Colonic mucosa (tissue), 4 donors: ENCODE measurements at regions of chr18 and their contacts with region 1.

Region 1: GRCh38 chr18:21179590-21180220 is 62.3 kb upstream of the GREB1L start:
- DNase-seq: peak; percentile 49
- H3K4me3 ChIP-seq: no peak overlapping the region
- H3K27ac ChIP-seq: no peak overlapping the region
- H3K4me1 ChIP-seq: no peaks in the 10 kb centered on the region
- H3K27me3 ChIP-seq: no peaks in the 10 kb centered on the region
- CTCF ChIP-seq: peak; percentile 50

Region 2: DNA sequence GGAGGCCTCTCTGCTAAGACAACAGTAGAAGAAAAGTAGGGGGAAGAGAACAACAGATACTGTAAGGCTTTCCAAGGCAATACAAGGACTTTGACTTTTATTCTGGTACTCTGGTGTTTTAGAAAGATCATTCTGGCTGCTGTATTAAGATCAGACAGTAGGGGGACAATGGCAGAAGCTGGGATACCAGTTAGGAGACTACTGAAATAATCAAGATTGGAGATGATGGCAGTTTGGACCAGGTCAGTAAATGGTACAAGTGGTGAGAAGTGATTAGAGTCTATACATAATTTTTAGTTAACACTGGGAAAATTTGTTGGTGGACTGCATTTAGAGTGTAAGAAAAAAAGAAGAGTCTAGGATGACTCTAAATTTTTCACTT is 207.8 kb before region 1 on chr18:
- intact Hi-C with region 1: loop called (anchors 10 kb)
- DNase-seq: no peak
- H3K4me3 ChIP-seq: no peak overlapping the region
- H3K27ac ChIP-seq: no peak overlapping the region
- H3K4me1 ChIP-seq: no peaks in the 10 kb centered on the region
- H3K27me3 ChIP-seq: no peaks in the 10 kb centered on the region
- CTCF ChIP-seq: peak; percentile 28

Region 3: DNA sequence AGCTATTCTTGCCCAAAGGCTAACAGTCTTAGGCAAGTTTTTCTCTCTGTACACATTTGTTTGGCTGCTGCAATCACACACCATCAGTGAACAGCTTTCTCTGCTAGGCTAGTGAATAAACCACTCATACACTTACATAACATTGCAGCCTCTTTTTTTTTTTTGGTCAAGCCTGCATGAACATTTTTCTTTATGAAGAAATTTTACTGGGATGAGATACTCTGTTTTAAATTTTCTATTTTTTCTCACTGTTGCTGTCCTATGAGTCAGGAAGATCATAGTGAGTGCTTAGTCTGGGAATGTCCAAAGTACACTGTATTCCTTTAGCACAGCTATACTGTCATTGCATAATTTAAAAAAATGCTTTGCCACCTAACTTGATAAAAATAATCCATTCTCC is 126.6 kb before region 1 on chr18:
- intact Hi-C with region 1: loop called (anchors 10 kb)
- DNase-seq: no peak
- H3K4me3 ChIP-seq: no peak overlapping the region
- H3K27ac ChIP-seq: no peak overlapping the region
- H3K4me1 ChIP-seq: no peaks in the 10 kb centered on the region
- H3K27me3 ChIP-seq: no peaks in the 10 kb centered on the region
- CTCF ChIP-seq: no peak

Region 4: DNA sequence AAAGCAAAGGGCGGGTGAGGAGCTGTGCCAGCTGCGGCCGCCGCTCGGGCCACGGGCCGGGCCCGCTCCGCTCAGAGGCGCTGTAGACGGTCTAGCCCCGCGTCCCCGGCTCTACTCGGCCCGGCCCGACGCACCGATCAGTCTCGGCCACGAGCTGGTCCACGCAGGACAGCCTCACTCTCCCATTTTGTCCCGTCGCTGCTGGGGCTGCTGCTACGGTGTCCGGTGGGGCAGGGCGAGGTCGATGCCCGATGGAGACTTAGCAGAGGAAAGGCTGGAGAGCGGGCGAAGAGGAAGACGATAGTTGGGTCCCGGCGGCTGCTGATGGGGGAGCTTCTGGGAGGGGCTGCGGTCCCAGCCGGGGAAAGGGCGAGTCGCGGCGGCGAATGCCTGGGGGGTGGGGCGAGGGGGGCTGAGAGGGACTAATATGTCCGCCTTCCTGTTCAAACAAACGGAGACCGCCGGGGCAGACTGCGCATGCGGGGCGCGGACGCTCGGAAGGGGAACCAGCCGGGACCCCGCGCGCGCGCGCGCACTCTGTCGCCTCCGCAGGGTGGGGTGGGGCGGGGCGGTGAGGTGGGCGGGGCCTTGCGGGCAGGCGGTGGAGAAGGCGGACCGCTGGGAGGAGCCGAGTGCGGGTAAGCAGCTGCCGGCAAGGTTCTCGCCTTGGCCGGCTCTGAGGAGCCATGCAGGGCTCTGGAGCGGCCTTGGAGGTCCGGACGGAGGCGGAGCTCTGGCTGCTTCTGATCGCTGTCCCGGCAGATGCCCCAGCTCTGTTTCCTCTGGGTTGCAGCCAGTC is 68.2 kb before region 1 on chr18 and contains the start of gene ROCK1:
- intact Hi-C with region 1: loop called (anchors 10 kb)
- DNase-seq: peak; percentile 99
- H3K4me3 ChIP-seq: peak within 1 kb of the TSS; percentile 94
- H3K27ac ChIP-seq: peak within 1 kb of the TSS; percentile 97
- H3K4me1 ChIP-seq: no peaks in the 10 kb centered on the region
- H3K27me3 ChIP-seq: no peaks in the 10 kb centered on the region
- CTCF ChIP-seq: no peak
- total RNA-seq, gene ROCK1: 28.9 to 39.5 TPM